ENCODE measurements at regions of chr16 and their contacts with region 1.

Region 1: GRCh38 chr16:67246934-67247697 is at the start of gene FHOD1:
- DNase-seq: peak; percentile 99
- ATAC-seq: peak; percentile 72
- H3K4me3 Mint-ChIP-seq: peak within 1 kb of the TSS; percentile 89
- H3K27ac Mint-ChIP-seq: peak within 1 kb of the TSS; percentile 89
- H3K4me1 Mint-ChIP-seq: peaks cover 48% of the 10 kb centered on the region
- H3K27me3 Mint-ChIP-seq: no peaks in the 10 kb centered on the region
- CTCF ChIP-seq: no peak
- total RNA-seq, gene FHOD1: 102 to 105 TPM

Region 2: GRCh38 chr16:67146523-67147357 is 100.4 kb before region 1 on chr16:
- CTCF ChIA-PET with region 1: no interaction called
- POLR2A ChIA-PET with region 1: no interaction called
- intact Hi-C with region 1: no loop called
- DNase-seq: no peak
- ATAC-seq: no peak
- H3K4me3 Mint-ChIP-seq: no peak overlapping the region
- H3K27ac Mint-ChIP-seq: no peak overlapping the region
- H3K4me1 Mint-ChIP-seq: peaks cover 7% of the 10 kb centered on the region
- H3K27me3 Mint-ChIP-seq: peaks cover 9% of the 10 kb centered on the region
- CTCF ChIP-seq: no peak

Region 3: DNA sequence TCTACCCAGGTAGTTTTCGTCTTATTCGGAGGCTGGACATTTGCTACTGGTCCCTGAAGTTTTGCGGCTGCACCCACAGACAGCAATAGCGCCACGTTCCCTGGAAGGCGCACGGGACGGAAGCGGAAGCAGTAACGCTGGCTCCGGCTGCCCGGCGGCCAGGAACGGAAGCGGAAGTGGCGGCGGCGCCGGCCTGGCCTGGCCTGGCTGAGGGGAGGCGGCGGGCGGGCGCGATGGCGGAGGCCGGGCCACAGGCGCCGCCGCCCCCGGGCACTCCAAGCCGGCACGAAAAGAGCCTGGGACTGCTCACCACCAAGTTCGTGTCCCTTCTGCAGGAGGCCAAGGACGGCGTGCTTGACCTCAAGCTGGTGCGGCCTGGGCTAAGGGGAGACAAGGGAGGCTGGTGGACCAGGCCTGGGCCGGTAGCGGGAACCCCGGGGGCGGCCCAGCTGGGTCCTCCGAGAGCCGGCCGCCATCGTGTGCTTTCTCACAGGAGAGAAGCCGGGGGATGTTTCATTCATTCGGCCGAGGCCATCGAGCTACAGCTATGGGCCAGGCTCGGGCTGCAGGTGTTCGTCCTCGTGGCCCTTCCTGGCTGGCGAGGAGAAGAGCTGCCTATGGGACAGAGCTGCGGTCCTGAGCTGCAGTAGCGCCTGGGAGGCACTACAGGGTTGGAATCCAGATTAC is 55.0 kb before region 1 on chr16 and contains the start of gene E2F4:
- CTCF ChIA-PET with region 1: interaction called, 6 read pairs
- POLR2A ChIA-PET with region 1: interaction called, 4 read pairs
- intact Hi-C with region 1: loop called (anchors 2 kb)
- DNase-seq: peak; percentile 91
- ATAC-seq: peak; percentile 98
- H3K4me3 Mint-ChIP-seq: peak within 1 kb of the TSS; percentile 93
- H3K27ac Mint-ChIP-seq: peak within 1 kb of the TSS; percentile 88
- H3K4me1 Mint-ChIP-seq: peaks cover 45% of the 10 kb centered on the region
- H3K27me3 Mint-ChIP-seq: no peaks in the 10 kb centered on the region
- CTCF ChIP-seq: no peak
- total RNA-seq, gene E2F4: 104 to 105 TPM

Measured in activated CD8-positive, alpha-beta T cell treated with anti-CD3 and anti-CD28 coated beads for 36 hours (primary cell).